ENCODE measurements at regions of chr2 and their contacts with region 1.

Region 1: DNA sequence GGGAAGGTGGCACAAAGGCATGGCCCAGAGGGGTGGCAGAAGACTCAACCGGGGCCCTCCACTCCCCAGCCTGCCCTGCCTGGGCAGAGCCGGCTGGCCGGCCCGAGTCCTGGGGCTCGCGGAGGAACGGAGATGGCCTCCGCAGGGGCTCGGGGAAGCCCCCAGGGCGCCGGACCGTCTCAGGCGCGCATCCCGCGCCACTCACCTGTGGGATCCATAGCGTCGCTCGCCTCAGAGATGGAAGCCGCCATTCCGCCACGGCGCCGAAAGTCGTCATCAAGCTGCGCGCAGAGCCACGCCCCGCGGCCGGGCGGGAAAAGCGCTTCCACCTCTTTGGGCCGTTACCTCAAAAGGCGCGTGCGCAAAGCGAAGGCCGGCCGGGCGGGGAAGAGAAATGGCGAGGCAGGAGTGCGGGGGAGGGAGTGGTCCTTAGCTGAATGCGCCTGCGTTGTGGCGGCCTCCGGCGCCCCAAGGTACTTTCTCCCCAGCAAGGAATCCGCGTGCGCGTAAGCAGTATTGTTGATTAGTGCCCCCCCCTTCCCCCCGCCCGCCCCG is at the start of gene SMPD4:
- DNase-seq: peak; percentile 90 to 93 (median 93)
- H3K4me3 ChIP-seq: peak within 1 kb of the TSS; percentile 67 to 90 (median 80)
- H3K4me3 Mint-ChIP-seq: peak within 1 kb of the TSS; percentile 83 to 92
- H3K27ac ChIP-seq: peak within 1 kb of the TSS; percentile 59 to 92
- H3K27ac Mint-ChIP-seq: peak within 1 kb of the TSS; percentile 88 to 97 (median 92)
- H3K4me1 ChIP-seq: peaks cover 17 to 25% of the 10 kb centered on the region in 2 donors
- H3K4me1 Mint-ChIP-seq: peaks cover 19% of the 10 kb centered on the region
- H3K27me3 ChIP-seq: no peaks in the 10 kb centered on the region
- H3K27me3 Mint-ChIP-seq: no peaks in the 10 kb centered on the region
- CTCF ChIP-seq: no peak
- polyA plus RNA-seq, gene SMPD4: 10.5 to 34.6 (median 14.2) TPM

Region 2: GRCh38 chr2:129758784-129759471 is 422.5 kb before region 1 on chr2:
- intact Hi-C with region 1: no loop called
- DNase-seq: peak; percentile 61 to 74 (median 72)
- H3K4me3 ChIP-seq: peak overlapping the region; percentile 2 to 68 (median 19)
- H3K4me3 Mint-ChIP-seq: peak overlapping the region; percentile 72 to 85
- H3K27ac ChIP-seq: peak overlapping the region in 1 of 2 donors; percentile 57
- H3K27ac Mint-ChIP-seq: peak overlapping the region in 6 of 7 donors; percentile 7 to 73 (median 50)
- H3K4me1 ChIP-seq: peaks cover 11 to 18% of the 10 kb centered on the region in 2 donors
- H3K4me1 Mint-ChIP-seq: peaks cover 1% of the 10 kb centered on the region
- H3K27me3 ChIP-seq: no peaks in the 10 kb centered on the region
- H3K27me3 Mint-ChIP-seq: peaks cover 0 to 2% (median 2%) of the 10 kb centered on the region in 3 donors
- CTCF ChIP-seq: no peak

Region 3: GRCh38 chr2:129877289-129877779 is 304.1 kb before region 1 on chr2:
- intact Hi-C with region 1: loop called in 1 of 2 experiments (anchors 10 kb)
- DNase-seq: peak; percentile 56 to 78 (median 67)
- H3K4me3 ChIP-seq: peak overlapping the region; percentile 79 to 95 (median 86)
- H3K4me3 Mint-ChIP-seq: peak overlapping the region; percentile 95 to 98
- H3K27ac ChIP-seq: peak overlapping the region in 1 of 2 donors; percentile 78
- H3K27ac Mint-ChIP-seq: peak overlapping the region in 6 of 7 donors; percentile 68 to 90 (median 82)
- H3K4me1 ChIP-seq: peaks cover 11 to 14% of the 10 kb centered on the region in 2 donors
- H3K4me1 Mint-ChIP-seq: peaks cover 21% of the 10 kb centered on the region
- H3K27me3 ChIP-seq: no peaks in the 10 kb centered on the region
- H3K27me3 Mint-ChIP-seq: peaks cover 0 to 4% (median 3%) of the 10 kb centered on the region in 3 donors
- CTCF ChIP-seq: no peak

Region 4: GRCh38 chr2:130261970-130262760 is 80.8 kb after region 1 on chr2:
- intact Hi-C with region 1: no loop called
- DNase-seq: no peak
- H3K4me3 ChIP-seq: no peak overlapping the region
- H3K4me3 Mint-ChIP-seq: no peak overlapping the region
- H3K27ac ChIP-seq: no peak overlapping the region
- H3K27ac Mint-ChIP-seq: peak overlapping the region in 1 of 7 donors; percentile 50
- H3K4me1 ChIP-seq: no peaks in the 10 kb centered on the region
- H3K4me1 Mint-ChIP-seq: no peaks in the 10 kb centered on the region
- H3K27me3 ChIP-seq: no peaks in the 10 kb centered on the region
- H3K27me3 Mint-ChIP-seq: peaks cover 10 to 13% (median 11%) of the 10 kb centered on the region in 3 donors
- CTCF ChIP-seq: no peak

Region 5: GRCh38 chr2:130342533-130343275 is 161.3 kb after region 1 on chr2 and contains the start of gene IMP4:
- intact Hi-C with region 1: loop called (anchors 2 to 5 kb)
- DNase-seq: peak; percentile 98 to 100 (median 99)
- H3K4me3 ChIP-seq: peak within 1 kb of the TSS; percentile 77 to 87 (median 84)
- H3K4me3 Mint-ChIP-seq: peak within 1 kb of the TSS; percentile 99 to 100
- H3K27ac ChIP-seq: peak within 1 kb of the TSS; percentile 80 to 96
- H3K27ac Mint-ChIP-seq: peak within 1 kb of the TSS; percentile 97 to 99 (median 99)
- H3K4me1 ChIP-seq: peaks cover 17 to 34% of the 10 kb centered on the region in 2 donors
- H3K4me1 Mint-ChIP-seq: peaks cover 25% of the 10 kb centered on the region
- H3K27me3 ChIP-seq: no peaks in the 10 kb centered on the region
- H3K27me3 Mint-ChIP-seq: peaks cover 0 to 4% (median 4%) of the 10 kb centered on the region in 3 donors
- CTCF ChIP-seq: peak; percentile 32
- polyA plus RNA-seq, gene IMP4: 57.6 to 81.2 (median 58.5) TPM

Measured in CD14-positive monocyte (primary cell).